ENCODE measurements at regions of chr1 and their contacts with region 1.

Region 1: DNA sequence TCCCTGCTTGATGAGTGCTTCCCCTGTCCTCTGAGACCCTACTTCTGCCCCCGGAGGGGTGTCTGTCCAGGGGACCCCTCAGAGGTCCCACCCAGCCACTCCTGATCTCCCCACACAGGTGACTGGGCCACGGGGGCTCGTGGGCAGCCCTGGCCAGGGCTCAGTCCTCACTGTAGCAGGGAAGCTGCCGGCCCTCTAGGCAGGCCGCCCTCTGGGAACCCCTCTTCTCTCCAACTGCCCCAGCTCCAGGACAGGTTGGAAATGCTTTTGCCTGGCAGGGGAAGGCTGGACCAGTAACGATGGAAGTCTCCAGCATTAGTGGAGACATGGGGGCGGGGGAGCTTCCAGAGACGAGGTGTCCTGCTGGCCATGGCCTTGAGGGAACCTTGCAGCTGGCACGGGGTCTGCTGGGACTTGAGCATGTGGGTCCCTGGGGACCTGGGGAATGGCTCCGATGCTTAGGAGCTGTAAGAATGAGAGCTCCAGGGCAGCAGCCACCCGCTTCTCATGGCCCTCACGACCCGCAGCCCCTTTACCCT is 3.1 kb upstream of the FNDC10 start:
- H3K4me3 ChIP-seq: no peak overlapping the region
- H3K27ac ChIP-seq: no peak overlapping the region
- H3K4me1 ChIP-seq: peaks cover under 1% of the 10 kb centered on the region; the same call in 1 of the 2 replicates
- CTCF ChIP-seq: no peak

Region 2: DNA sequence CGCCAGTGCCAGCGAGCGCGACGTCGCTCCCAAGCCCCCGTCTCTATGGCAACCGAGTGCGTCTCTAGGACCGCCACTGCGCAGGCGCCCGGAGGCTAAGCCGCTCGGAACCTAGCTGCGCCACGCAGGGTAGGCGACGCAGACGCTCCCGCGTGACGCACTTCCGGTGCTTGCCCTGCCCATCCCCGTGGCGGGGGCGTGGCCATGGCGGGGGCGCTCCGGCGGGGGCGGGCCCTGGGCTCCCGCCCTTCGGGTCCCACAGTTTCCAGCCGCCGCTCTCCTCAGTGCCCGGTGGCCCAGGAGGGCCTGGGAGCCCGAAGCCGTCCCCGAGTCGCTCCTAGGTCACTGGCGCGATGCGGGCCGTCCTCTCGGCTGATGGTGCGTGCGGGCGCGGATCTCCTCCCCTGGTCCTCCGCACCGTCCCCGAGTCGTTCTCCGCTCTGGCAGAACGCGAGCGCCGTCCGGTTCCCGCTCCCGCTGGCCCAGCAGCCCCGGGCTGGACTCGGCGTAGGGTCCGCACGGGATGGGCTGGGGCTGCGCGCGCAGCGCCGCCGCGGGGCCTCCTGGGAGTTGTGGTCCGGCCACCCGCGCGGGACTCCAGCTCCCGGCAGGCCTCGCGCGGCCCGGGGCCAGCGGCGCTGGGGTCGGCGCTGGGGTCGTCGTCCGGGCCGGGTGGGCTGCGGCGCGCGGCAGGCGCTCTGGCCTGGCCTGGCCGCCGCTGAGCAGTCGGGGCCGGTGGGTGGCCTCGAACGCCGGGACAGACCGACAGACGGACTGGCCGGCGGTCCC is 12.4 kb after region 1 on chr1 and contains the start of gene MIB2:
- CTCF ChIA-PET with region 1: interaction called, 6 read pairs
- POLR2A ChIA-PET with region 1: interaction called, 17 read pairs
- H3K4me3 ChIP-seq: peak within 1 kb of the TSS; percentile 100
- H3K27ac ChIP-seq: peak within 1 kb of the TSS; percentile 99
- H3K4me1 ChIP-seq: 0 out of 2 replicates have a peak, but pooled peaks cover 3% of the 10 kb centered on the region
- CTCF ChIP-seq: no peak